Activated CD4-positive, alpha-beta T cell treated with anti-CD3 and anti-CD28 coated beads for 36 hours (primary cell): ENCODE measurements at regions of chr13 and their contacts with region 1.

Region 1: DNA sequence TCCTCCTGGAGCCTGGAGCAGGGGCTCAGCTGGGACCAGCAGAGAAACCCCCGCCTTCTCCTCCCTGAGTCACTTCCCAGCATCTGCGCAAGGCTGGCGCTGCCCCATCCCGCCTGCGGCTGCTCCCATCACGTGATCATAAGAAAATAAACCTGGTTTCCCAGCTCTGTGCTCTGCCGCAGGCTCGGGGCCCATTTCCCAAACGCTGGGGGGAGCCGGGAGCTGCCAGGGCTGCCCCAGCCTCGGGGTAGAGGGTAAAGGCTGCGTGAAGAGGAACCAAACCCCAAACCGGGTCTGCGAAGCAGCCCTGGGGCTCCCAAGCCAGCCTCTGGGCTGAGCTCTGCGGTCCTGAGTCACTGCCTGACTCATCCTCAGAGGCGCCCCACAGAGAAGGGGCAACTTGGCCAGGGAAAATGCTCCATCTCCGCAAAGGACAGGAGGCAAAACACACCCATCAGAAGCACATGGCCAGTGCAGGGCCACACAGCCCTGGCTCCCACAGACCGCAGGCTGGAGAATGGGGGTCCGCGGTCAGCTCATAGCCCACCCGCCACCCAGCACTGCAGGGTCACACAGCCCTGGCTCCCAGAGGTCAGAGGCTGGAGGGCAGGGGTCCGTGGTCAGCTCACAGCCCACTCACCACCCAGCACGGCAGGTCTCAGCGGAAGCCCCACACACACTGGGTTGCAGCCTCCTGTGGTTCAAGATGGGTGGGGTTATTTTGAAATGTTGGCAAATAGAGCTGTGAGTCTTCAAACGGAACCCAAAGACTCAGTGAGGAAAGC is 67.1 kb downstream of the RASA3 start:
- DNase-seq: peak; percentile 91
- ATAC-seq: peak; percentile 82
- H3K4me3 Mint-ChIP-seq: peak overlapping the region; percentile 69
- H3K27ac Mint-ChIP-seq: peak overlapping the region; percentile 95
- H3K4me1 Mint-ChIP-seq: peaks cover 69% of the 10 kb centered on the region
- H3K27me3 Mint-ChIP-seq: no peaks in the 10 kb centered on the region

Region 2: DNA sequence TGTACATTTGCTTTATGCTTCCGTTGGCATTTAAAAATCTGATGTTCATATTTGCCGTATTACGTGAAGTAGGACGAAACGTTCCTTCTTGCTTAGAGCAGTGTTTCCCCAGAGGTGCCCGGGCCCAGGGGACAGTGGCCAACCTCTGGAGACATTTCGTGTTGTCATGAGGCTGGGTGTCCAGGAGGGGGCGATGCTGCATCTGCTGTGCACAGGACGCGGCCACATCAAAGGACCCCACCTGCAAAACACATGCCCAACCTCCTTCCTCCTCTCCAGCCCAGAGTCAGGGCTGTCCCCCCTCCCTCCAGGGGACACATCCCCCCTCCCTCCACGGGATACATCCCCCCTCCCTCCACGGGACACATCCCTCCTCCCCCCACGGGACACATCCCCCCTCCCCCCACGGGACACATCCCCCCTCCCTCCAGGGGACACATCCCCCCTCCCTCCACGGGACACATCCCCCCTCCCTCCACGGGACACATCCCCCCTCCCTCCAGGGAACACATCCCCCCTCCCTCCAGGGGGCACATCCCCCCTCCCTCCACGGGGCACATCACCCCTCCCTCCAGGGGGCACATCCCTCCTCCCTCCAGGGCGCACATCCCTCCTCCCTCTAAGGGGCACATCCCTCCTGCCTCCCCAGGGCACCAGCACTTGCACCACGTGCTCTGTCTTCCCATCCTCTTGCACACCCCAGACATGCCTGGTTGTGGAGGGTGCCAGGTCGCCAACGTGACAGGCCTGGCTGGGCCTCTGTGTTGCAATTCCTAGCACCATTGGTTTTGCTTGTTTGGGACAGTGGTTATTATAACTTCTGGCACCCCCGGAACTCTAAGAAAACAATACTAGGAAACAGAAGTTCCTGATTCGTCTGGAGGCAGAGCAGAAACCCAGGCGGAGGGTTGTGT is 248.1 kb before region 1 on chr13:
- CTCF ChIA-PET with region 1: no interaction called
- POLR2A ChIA-PET with region 1: no interaction called
- intact Hi-C with region 1: loop called in 1 of 2 experiments (anchors 1 kb)
- DNase-seq: peak; percentile 95
- ATAC-seq: peak; percentile 85
- H3K4me3 Mint-ChIP-seq: peak overlapping the region; percentile 96
- H3K27ac Mint-ChIP-seq: no peak overlapping the region
- H3K4me1 Mint-ChIP-seq: peaks cover 21% of the 10 kb centered on the region
- H3K27me3 Mint-ChIP-seq: no peaks in the 10 kb centered on the region

Region 3: DNA sequence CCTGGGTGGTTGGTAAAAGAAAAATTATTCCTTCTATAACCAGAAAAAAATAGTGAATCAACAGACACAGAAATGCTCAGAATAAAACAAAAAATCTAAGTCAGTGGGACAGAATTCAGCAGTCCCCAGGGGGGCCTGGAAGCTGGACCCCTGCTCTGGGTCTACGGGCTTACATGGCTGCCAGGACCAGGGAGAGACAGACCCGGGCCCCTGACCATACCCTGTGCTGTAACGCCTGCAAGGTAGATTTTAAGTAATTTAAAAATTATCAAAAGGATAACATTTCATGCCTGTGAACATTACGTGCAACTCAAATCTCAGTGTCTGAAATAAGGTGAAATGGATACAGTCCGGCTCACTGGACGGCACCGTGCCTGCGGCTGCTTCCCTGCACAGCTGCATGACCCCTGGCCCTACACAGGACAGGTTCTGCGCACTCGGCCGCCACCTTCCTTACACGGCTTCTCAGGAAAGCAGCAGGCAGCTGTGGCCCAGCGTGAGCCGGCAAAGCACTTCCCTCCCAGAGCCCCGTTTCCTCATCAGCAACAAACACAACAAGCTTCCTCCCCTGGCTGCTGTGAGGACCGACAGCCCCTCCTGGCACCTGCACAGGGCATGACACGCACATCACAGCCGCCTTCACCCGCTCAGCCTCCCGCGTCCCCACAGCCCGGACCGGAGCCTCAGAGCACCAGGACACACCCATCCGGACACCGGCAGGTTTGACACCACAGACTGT is 44.9 kb after region 1 on chr13:
- CTCF ChIA-PET with region 1: interaction called, 6 read pairs
- POLR2A ChIA-PET with region 1: no interaction called
- intact Hi-C with region 1: loop called (anchors 2 to 5 kb)
- DNase-seq: peak; percentile 85
- ATAC-seq: peak; percentile 82
- H3K4me3 Mint-ChIP-seq: peak overlapping the region; percentile 74
- H3K27ac Mint-ChIP-seq: peak overlapping the region; percentile 90
- H3K4me1 Mint-ChIP-seq: peaks cover 81% of the 10 kb centered on the region
- H3K27me3 Mint-ChIP-seq: no peaks in the 10 kb centered on the region

Region 4: GRCh38 chr13:114132419-114133121 is 67.2 kb after region 1 on chr13 and contains the start of gene RASA3:
- CTCF ChIA-PET with region 1: interaction called, 3 read pairs
- POLR2A ChIA-PET with region 1: interaction called, 3 read pairs
- intact Hi-C with region 1: loop called (anchors 1 kb)
- DNase-seq: peak; percentile 74
- ATAC-seq: peak; percentile 35
- H3K4me3 Mint-ChIP-seq: peak within 1 kb of the TSS; percentile 100
- H3K27ac Mint-ChIP-seq: peak within 1 kb of the TSS; percentile 95
- H3K4me1 Mint-ChIP-seq: peaks cover 39% of the 10 kb centered on the region
- H3K27me3 Mint-ChIP-seq: no peaks in the 10 kb centered on the region
- total RNA-seq, gene RASA3: 33.0 to 34.7 TPM

Region 5: DNA sequence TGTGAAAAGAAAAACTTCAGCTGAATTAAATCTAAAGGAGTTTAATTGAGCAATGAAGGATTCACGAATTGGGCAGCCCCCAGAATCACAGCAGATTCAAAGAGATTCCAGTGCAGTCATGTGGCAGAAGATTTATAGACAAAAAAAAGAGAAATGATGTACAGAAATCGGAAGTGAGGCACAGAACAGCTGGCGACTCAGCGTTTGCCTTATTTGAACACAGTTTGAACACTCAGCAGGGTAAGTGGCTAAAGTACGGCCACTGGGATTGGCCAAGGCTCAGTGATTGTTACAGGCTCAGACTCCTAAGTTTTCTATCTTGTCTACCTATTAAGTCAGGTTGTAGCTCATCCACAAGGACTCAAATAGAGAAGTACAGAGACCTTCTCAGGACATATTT is 102.1 kb after region 1 on chr13:
- CTCF ChIA-PET with region 1: no interaction called
- POLR2A ChIA-PET with region 1: no interaction called
- intact Hi-C with region 1: no loop called
- DNase-seq: peak; percentile 48
- ATAC-seq: peak; percentile 71
- H3K4me3 Mint-ChIP-seq: no peak overlapping the region
- H3K27ac Mint-ChIP-seq: peak overlapping the region; percentile 56
- H3K4me1 Mint-ChIP-seq: peaks cover 47% of the 10 kb centered on the region
- H3K27me3 Mint-ChIP-seq: no peaks in the 10 kb centered on the region

Region 6: GRCh38 chr13:114226699-114227323 is 161.5 kb after region 1 on chr13:
- CTCF ChIA-PET with region 1: interaction called, 7 read pairs
- POLR2A ChIA-PET with region 1: no interaction called
- intact Hi-C with region 1: loop called (anchors 1 to 5 kb)
- DNase-seq: peak; percentile 93
- ATAC-seq: peak; percentile 91
- H3K4me3 Mint-ChIP-seq: no peak overlapping the region
- H3K27ac Mint-ChIP-seq: peak overlapping the region; percentile 65
- H3K4me1 Mint-ChIP-seq: peaks cover 52% of the 10 kb centered on the region
- H3K27me3 Mint-ChIP-seq: no peaks in the 10 kb centered on the region

Region 7: GRCh38 chr13:114281351-114282040 is 216.2 kb after region 1 on chr13 and contains the start of gene UPF3A:
- CTCF ChIA-PET with region 1: no interaction called
- POLR2A ChIA-PET with region 1: no interaction called
- intact Hi-C with region 1: loop called in 1 of 2 experiments (anchors 1 kb)
- DNase-seq: peak; percentile 95
- ATAC-seq: peak; percentile 83
- H3K4me3 Mint-ChIP-seq: peak within 1 kb of the TSS; percentile 84
- H3K27ac Mint-ChIP-seq: peak within 1 kb of the TSS; percentile 99
- H3K4me1 Mint-ChIP-seq: peaks cover 49% of the 10 kb centered on the region
- H3K27me3 Mint-ChIP-seq: no peaks in the 10 kb centered on the region
- total RNA-seq, gene UPF3A: 41.1 to 43.3 TPM